Dendritic cell treated with granulocyte-macrophage colony-stimulating factor and Interleukin-4, amounts not matched to agents 40 ng/mL and 50 ng/mL, for 4 days (primary cell): ENCODE measurements at regions of chr7 and their contacts with region 1.

Region 1: DNA sequence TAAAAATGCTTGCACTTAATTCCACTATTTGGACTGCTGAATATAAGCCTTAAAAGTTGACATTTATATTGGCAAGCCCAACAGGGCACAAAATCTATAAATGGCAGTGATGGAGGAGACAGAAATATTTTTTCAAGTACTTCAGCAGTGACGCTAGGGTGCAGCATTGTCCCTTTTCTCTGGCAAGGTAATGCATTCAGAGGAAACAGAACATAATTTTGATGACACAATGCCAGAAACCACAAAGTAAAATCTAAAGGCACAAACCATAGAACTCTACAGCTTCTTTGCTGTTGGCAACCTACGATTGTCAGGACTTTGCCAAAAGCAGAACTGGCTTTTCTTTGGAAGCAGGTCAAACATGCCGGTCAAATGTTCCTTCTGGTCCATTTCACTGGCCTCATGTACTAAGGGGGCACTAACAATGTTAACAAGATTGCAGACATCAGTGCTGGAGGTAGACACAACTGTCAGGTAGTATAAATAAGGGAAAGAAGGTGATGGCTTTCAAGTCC is 30.9 kb upstream of the FAM133B start:
- H3K4me3 Mint-ChIP-seq: peak overlapping the region; percentile 17
- H3K27ac Mint-ChIP-seq: peak overlapping the region; percentile 91
- H3K4me1 Mint-ChIP-seq: peaks cover 22% of the 10 kb centered on the region
- H3K27me3 Mint-ChIP-seq: no peaks in the 10 kb centered on the region

Region 2: DNA sequence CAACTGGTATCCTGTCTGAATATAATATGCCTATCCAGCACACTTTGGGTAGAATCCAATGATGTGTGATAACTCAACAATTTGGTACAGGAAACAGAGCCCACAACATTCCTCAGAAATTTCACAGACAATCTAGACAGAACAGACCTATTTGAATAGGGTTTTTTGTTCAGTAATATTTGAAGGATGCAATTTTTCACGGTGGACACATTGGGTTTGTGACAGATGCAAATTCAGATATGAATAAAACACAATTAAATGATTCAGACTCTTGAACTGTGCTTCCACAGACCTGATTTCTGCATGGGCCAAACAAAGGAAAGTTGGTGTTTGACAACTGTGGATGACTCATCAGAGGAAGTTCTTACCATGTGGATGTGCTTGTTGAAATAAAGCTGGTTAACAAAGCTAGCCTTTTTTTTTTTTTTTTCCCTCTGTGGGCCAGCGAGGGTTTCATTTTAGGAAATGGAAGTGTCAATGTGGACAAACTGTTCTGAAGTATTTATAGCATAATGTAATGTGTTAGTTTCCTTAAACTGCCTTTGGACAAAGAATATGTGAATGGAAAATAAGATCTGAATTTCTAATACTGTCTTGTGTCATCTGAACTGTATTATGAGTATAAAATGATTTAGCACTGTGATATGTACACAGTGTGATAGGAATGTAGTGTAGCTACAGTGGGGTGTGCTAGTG is 12.3 kb after region 1 on chr7:
- intact Hi-C with region 1: loop called (anchors 1 kb)
- H3K4me3 Mint-ChIP-seq: no peak overlapping the region
- H3K27ac Mint-ChIP-seq: peak overlapping the region; percentile 80
- H3K4me1 Mint-ChIP-seq: peaks cover 35% of the 10 kb centered on the region
- H3K27me3 Mint-ChIP-seq: no peaks in the 10 kb centered on the region

Region 3: DNA sequence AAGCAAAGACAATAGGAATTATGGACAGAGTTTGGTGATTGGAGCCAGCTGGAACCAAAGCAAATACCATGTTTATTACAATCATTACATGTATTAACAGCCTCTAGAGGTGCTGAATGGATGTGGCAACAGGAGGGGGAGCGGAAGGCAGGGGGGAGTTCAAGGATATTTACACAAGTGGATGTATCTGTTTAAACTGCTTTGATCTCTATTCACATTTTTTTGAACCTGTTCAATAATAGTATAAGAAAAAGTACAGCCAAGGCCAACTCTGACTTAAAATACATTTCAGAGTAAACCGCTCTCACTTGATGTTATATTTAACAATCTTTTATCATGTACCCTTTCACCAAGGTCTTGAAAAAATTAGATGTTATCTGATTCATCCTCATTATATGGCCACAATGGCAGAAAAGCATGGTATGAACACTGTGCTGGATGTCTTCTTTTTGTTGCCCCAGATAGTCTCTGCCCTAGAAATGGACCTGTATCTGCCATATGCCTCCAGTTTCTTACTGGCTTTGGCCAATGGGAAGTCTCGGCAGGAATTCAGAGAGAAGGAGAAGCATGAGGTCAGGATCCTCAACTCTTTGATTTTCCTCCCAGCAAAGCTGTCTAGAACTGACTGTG is 57.3 kb after region 1 on chr7:
- intact Hi-C with region 1: loop called (anchors 5 kb)
- H3K4me3 Mint-ChIP-seq: no peak overlapping the region
- H3K27ac Mint-ChIP-seq: no peak overlapping the region
- H3K4me1 Mint-ChIP-seq: peaks cover 19% of the 10 kb centered on the region
- H3K27me3 Mint-ChIP-seq: no peaks in the 10 kb centered on the region

Region 4: DNA sequence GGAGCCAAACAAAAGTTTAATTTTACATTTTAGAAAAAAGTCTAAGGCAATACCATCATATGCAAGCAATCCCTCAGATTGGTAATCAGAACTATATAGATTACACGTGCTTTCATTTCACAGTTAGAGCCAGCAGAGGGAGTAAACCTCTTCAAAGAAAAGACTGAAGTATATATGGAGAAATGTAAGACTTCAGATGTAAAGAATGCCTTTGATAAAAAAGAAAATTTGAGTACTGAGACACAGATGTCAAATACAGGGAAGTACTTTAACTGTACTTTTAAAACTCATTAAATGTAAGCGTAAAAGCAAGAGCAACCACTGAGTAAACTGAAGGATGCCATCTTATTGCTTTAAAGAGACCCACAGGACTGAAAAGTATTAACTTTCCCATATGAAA is 70.5 kb after region 1 on chr7:
- intact Hi-C with region 1: loop called (anchors 1 kb)
- H3K4me3 Mint-ChIP-seq: no peak overlapping the region
- H3K27ac Mint-ChIP-seq: no peak overlapping the region
- H3K4me1 Mint-ChIP-seq: peaks cover 13% of the 10 kb centered on the region
- H3K27me3 Mint-ChIP-seq: no peaks in the 10 kb centered on the region

Region 5: DNA sequence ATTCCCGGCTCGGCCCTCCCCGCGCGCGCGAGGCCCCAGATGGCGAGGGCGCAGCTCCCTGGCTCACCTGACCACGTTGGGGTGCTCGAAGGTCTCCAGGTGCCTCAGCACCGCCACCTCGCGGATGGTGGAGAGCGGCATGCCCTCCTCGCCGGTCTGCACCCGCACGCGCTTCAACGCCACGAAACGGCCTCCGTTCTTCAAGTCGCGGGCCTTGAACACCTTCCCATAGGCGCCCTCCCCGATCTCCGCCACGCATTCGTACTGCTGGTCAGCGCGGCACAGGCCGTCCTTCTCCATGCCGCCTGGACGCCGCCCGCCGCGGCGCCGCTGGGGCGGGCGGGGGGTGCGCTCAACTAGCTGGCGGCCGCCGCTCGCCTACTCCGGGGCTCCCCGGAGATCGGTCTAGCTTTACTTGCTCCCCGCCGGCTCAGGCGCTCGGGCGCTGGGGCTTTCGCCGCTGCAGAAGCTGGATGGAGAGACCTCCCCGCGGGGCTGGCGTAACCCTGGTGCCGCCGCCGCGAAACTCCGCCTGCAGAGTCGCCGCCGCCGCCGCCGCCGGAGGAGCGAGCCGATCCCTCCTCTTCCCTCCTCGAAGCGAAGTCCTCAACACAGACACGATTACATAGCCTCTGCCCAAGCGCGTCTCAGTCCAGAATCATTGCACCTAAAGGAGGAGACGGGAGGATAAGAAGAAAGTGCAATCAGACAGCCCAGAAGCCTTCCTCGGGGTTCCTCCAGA is 212.1 kb after region 1 on chr7:
- intact Hi-C with region 1: loop called (anchors 2 kb)
- H3K4me3 Mint-ChIP-seq: peak overlapping the region; percentile 92
- H3K27ac Mint-ChIP-seq: peak overlapping the region; percentile 84
- H3K4me1 Mint-ChIP-seq: peaks cover 34% of the 10 kb centered on the region
- H3K27me3 Mint-ChIP-seq: peaks cover 6% of the 10 kb centered on the region

Region 6: DNA sequence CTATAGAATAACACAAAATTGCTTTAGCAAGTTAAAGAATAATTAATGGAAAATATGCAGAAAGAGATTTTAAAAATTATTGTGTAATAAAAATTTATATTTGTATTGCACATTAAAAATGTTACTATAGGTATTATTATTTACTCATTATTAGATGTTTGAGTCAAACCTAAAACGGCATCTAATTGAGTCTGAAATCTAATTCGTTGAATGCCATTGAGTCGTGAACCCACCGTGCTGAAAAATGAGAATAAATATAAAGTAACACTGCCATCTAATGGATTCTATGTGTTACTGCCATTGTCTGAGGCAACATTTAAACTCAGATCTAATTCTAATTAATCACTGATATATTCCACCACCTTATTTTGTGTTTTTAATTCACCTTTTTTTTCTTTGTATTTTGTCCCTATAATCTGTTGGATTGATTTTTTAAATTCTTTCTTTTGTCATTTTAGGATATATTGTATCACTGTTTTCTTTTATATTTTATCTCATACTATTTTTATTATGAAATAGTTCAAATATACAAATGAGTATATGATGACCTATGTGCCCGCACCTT is 434.5 kb after region 1 on chr7:
- intact Hi-C with region 1: loop called (anchors 1 kb)
- H3K4me3 Mint-ChIP-seq: no peak overlapping the region
- H3K27ac Mint-ChIP-seq: no peak overlapping the region
- H3K4me1 Mint-ChIP-seq: peaks cover 8% of the 10 kb centered on the region
- H3K27me3 Mint-ChIP-seq: no peaks in the 10 kb centered on the region

Region 7: GRCh38 chr7:93231799-93232672 is 611.0 kb after region 1 on chr7 and contains the start of gene VPS50:
- intact Hi-C with region 1: loop called (anchors 10 kb)
- H3K4me3 Mint-ChIP-seq: peak within 1 kb of the TSS; percentile 93
- H3K27ac Mint-ChIP-seq: peak within 1 kb of the TSS; percentile 87
- H3K4me1 Mint-ChIP-seq: peaks cover 8% of the 10 kb centered on the region
- H3K27me3 Mint-ChIP-seq: peaks cover 7% of the 10 kb centered on the region